ENCODE measurements at regions of chr16 and their contacts with region 1.

Region 1: GRCh38 chr16:55543472-55543871 is 23.0 kb upstream of the CAPNS2 start:
- DNase-seq: no peak
- H3K4me3 ChIP-seq: no peak overlapping the region
- H3K27ac ChIP-seq: no peak overlapping the region
- H3K4me1 ChIP-seq: no peaks in the 10 kb centered on the region
- H3K27me3 ChIP-seq: no peaks in the 10 kb centered on the region
- CTCF ChIP-seq: peak; percentile 16 to 29 (median 27)
- POLR2A ChIP-seq: no peak

Region 2: GRCh38 chr16:55389426-55390073 is 153.9 kb before region 1 on chr16:
- intact Hi-C with region 1: no loop called
- DNase-seq: no peak
- H3K4me3 ChIP-seq: no peak overlapping the region
- H3K27ac ChIP-seq: no peak overlapping the region
- H3K4me1 ChIP-seq: no peaks in the 10 kb centered on the region
- H3K27me3 ChIP-seq: no peaks in the 10 kb centered on the region
- CTCF ChIP-seq: no peak
- POLR2A ChIP-seq: no peak

Region 3: GRCh38 chr16:55465077-55465896 is 78.2 kb before region 1 on chr16:
- intact Hi-C with region 1: loop called (anchors 5 kb)
- DNase-seq: peak; percentile 97
- H3K4me3 ChIP-seq: no peak overlapping the region
- H3K27ac ChIP-seq: no peak overlapping the region
- H3K4me1 ChIP-seq: no peaks in the 10 kb centered on the region
- H3K27me3 ChIP-seq: no peaks in the 10 kb centered on the region
- CTCF ChIP-seq: peak; percentile 99 to 100 (median 100)
- POLR2A ChIP-seq: no peak

Region 4: GRCh38 chr16:55701442-55702319 is 158.2 kb after region 1 on chr16:
- intact Hi-C with region 1: loop called (anchors 10 kb)
- DNase-seq: peak; percentile 61
- H3K4me3 ChIP-seq: no peak overlapping the region
- H3K27ac ChIP-seq: no peak overlapping the region
- H3K4me1 ChIP-seq: no peaks in the 10 kb centered on the region
- H3K27me3 ChIP-seq: no peaks in the 10 kb centered on the region
- CTCF ChIP-seq: peak; percentile 51 to 58 (median 56)
- POLR2A ChIP-seq: no peak